Activated CD4-positive, alpha-beta T cell treated with anti-CD3 and anti-CD28 coated beads, Interleukin-2, amount 10 ng/mL, durations not matched to agents 24 days and 14 days (primary cell): ENCODE measurements at regions of chr9 and their contacts with region 1.

Region 1: GRCh38 chr9:112074250-112075008 is 100.7 kb downstream of the SUSD1 start:
- DNase-seq: peak; percentile 89
- H3K4me3 Mint-ChIP-seq: peak overlapping the region; percentile 7
- H3K27ac Mint-ChIP-seq: peak overlapping the region; percentile 5
- H3K4me1 Mint-ChIP-seq: peaks cover 24% of the 10 kb centered on the region
- H3K27me3 Mint-ChIP-seq: peaks cover 3% of the 10 kb centered on the region

Region 2: DNA sequence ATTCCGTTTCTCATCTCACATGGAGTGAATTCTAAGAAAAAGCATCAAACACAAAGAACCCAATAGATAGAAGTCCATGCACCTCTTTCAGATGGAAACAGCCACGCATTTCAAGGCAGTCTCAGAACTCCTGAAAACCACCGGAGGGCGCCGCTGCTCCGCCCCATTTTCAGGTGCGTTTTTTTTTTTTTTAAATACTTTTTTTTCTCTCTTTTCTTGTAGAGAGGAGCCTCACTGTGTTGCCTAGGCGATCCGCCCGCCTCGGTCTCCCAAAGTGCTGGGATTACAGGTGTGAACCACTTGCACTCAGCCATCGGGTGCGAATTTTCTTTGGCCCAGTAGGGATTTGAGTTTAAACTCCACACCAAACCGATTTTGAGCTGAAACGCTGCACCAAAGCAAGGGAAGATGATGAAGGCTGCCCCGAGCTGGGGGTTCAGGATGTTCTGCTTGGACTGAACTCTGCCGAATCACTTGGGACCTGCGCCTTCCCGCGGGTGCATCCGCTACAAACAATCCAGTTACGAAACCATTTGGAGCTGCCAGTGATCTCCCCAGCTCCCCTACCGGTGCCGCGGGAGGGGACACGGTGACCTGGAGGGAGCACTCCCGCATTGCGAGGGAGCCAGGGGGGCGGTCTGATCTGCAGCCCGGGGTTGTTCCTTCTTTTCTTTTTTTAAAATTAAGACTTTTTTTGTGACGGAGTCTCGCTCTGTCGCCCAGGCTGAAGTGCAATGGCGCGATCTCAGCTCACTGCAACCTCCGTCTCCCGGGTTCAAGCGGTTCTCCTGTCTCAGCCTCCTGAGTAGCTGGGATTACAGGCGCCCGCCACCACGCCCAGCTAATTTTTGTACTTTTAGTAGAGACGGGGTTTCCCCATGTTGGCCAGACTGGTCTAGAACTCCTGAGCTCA is 476.4 kb before region 1 on chr9:
- intact Hi-C with region 1: loop called (anchors 1 kb)
- DNase-seq: peak; percentile 86
- H3K4me3 Mint-ChIP-seq: peak overlapping the region; percentile 89
- H3K27ac Mint-ChIP-seq: no peak overlapping the region
- H3K4me1 Mint-ChIP-seq: peaks cover 16% of the 10 kb centered on the region
- H3K27me3 Mint-ChIP-seq: peaks cover 35% of the 10 kb centered on the region

Region 3: DNA sequence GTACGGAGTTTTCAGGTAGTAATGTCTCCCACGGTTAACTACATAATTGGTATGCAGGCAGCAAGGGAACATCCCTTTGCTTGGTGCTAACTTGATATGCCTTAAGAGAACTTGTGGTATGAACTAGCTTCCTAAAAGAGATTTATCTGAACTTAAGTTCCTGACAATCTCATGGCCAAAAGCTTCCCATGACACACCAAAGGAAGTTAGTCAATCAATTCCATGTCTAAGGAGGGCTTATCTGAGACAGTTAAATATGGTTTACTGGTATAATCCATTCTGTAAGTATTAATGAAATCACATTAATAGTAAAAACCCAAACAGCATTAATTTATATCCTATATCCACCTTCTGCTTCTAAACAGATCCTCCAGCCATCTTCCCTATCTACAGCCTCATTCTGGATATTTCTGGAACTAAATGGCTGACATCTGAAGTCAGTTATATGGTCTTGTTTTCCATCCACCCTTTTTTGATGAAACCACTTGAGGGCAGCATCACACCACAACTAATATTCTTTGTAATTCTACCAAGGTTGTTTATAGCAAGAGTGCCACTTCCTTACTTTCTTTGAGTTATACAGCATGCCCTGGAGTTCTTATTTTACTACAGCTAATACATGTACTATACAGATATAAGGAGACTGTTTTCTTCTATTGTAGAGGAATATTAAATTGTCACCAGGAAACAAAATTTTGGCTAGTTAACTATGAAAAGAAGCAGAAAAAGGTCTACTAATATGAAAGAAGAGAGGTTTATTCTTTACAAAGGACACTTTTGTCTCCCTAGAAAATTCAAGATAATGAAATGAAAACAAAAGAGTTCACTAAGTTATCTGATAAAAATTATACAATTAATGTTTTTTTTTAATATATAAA is 314.4 kb before region 1 on chr9:
- intact Hi-C with region 1: loop called (anchors 1 kb)
- DNase-seq: peak; percentile 87
- H3K4me3 Mint-ChIP-seq: no peak overlapping the region
- H3K27ac Mint-ChIP-seq: no peak overlapping the region
- H3K4me1 Mint-ChIP-seq: no peaks in the 10 kb centered on the region
- H3K27me3 Mint-ChIP-seq: no peaks in the 10 kb centered on the region

Region 4: DNA sequence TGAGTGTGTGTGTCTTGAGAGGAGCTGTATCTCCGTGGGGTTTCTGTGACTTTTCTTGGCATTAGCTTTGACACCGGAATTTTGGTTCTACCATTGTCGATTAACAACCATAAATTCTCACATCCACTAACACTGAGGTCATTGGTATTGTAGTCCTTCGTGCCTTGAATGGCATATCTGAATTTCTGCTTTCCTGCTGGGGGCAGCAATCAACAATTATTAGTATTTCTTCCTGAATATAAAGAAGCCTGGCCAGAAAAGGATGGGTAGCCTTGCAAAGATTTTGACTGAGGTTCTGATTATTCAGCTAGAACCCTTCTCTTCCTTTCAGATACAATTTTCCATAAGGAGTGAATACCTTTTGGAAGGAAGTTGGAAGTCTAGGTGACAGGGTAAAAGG is 246.2 kb before region 1 on chr9:
- intact Hi-C with region 1: loop called (anchors 1 kb)
- DNase-seq: no peak
- H3K4me3 Mint-ChIP-seq: no peak overlapping the region
- H3K27ac Mint-ChIP-seq: no peak overlapping the region
- H3K4me1 Mint-ChIP-seq: no peaks in the 10 kb centered on the region
- H3K27me3 Mint-ChIP-seq: peaks cover 6% of the 10 kb centered on the region

Region 5: DNA sequence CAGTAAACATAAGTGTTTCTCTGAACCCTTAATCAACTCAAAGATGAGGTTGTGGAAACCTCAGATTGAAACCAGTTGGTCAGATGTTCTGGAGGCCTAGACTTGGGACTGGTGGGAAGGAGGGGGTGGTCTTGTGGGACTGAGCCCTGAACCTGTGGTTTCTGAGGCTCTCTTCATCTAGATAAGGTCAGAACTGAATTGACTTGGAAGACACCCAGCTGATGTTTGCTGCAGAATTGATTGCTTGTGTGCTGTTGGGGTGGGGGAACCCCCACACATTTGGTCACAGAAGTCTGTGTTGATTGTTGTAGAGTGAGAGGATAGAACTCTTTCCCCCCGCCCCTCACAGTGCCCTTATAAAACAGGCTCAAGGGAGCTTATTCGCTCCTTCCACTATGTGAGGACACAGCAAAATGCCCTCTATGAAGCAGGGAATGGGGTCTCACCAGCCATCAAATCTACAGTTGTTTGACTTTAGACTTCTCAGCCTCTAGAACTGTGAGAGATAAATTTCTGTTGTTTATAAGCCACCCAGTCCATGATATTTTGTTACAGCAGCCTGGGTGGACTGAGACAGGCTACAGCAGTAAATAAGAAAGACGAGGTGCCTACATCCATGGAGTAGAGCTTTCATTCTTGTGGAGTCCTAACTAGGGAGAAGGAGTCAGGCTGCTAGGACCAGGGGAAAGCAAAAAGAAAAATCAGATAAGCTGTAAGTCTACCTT is 203.5 kb before region 1 on chr9:
- intact Hi-C with region 1: loop called (anchors 1 kb)
- DNase-seq: peak; percentile 57
- H3K4me3 Mint-ChIP-seq: no peak overlapping the region
- H3K27ac Mint-ChIP-seq: peak overlapping the region; percentile 66
- H3K4me1 Mint-ChIP-seq: peaks cover 12% of the 10 kb centered on the region
- H3K27me3 Mint-ChIP-seq: peaks cover 19% of the 10 kb centered on the region

Region 6: DNA sequence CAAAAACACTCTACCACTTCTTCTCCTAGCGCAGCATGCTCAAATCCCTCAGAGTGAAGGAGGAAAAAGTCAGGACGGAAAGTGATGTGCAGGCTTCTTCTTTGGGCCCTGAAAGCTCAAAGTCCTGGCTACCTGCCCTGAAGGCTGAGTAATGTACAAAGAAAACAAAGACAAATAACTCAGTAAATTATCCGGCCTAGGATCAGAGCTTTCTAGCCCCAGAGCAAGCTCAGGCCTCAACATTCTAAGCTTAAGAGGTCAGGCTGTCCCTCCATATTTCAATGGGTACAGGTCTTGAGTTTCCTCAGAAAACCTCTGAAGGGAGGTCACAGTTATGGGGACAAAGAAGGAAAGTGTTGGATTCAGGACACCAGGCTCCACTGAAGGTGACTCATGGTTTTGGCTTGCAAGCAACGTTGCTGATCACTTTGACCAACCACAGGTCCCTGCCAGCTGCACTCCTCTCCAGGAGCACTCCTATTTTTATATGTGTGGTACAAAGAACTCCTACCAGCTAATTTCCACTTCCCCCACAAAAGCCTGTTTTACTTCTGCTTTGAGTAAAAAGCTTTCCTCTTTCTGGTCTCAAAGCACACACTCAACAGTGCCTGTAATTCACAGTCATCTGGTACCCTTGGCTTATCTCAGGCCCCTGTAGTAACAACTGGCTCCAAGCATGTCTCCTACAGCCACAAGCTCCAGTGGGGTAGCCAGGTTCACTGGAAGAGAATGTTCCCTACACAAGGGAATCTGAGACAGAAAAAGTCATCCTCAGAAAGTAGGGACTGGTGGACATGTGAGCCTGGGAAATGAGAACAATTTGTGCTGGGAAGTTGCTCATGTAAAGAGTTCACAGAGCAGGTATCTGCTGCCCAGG is 62.2 kb before region 1 on chr9:
- intact Hi-C with region 1: loop called (anchors 5 kb)
- DNase-seq: no peak
- H3K4me3 Mint-ChIP-seq: peak overlapping the region; percentile 15
- H3K27ac Mint-ChIP-seq: peak overlapping the region; percentile 64
- H3K4me1 Mint-ChIP-seq: peaks cover 20% of the 10 kb centered on the region
- H3K27me3 Mint-ChIP-seq: peaks cover 36% of the 10 kb centered on the region